Mammary epithelial cell (primary cell): ENCODE measurements at regions of chr1 and their contacts with region 1.

Region 1: GRCh38 chr1:156892190-156893047 is 1.1 kb upstream of the PEAR1 start:
- DNase-seq: peak; percentile 61
- H3K4me3 ChIP-seq: peak overlapping the region; percentile 7 to 43 (median 11)
- H3K27ac ChIP-seq: no peak overlapping the region
- H3K4me1 ChIP-seq: peaks cover 30% of the 10 kb centered on the region
- H3K27me3 ChIP-seq: no peaks in the 10 kb centered on the region
- CTCF ChIP-seq: peak; percentile 63 to 84

Region 2: GRCh38 chr1:156659994-156660751 is 232.2 kb before region 1 on chr1:
- CTCF ChIA-PET with region 1: no interaction called
- dilution Hi-C with region 1: no loop called
- in situ Hi-C with region 1: no loop called
- intact Hi-C with region 1: loop called (anchors 1 kb)
- DNase-seq: peak; percentile 95
- H3K4me3 ChIP-seq: peak overlapping the region; percentile 27 to 54 (median 46)
- H3K27ac ChIP-seq: peak overlapping the region; percentile 51
- H3K4me1 ChIP-seq: peaks cover 41% of the 10 kb centered on the region
- H3K27me3 ChIP-seq: no peaks in the 10 kb centered on the region
- CTCF ChIP-seq: peak; percentile 91 to 98

Region 3: DNA sequence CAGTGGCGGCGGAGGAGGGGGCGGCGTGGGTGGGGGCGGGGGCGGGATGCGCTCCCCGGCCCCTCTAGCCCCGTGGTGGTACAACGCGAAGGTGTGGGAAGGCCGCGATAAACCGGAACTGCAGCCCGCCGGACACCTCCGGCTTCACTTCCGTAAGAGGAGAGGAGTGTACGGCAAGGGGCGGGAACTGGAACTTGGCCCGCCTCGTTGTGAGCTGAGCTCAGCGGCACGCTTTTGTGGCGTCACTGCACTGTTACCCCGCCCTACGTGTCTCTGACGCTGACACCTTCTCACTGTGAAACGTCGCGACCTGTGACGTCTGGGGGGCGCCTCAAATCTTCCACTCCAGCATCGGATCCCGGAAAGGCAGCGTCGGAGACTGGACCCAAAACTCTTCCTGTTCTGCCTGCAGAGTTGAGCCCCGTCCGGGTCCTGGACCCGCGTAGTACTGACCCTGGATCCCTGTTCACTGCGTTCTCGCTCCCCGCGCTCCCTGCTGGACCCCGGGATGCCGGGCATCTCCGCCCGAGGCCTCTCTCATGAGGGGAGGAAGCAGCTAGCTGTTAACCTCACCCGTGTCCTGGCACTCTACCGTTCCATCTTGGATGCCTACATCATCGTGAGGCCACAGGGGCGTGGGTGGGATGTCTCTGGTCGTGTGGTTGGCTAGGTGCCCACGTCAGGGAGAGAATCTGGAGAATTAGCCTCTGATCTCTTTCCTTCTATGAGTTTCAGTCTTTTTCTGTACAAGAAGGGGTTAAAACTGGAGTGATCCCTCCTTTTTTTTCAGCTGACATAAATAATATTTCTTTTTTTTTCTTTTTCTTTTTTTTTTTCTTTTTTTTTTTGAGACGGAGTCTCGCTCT is 163.6 kb before region 1 on chr1 and contains the start of gene ISG20L2:
- CTCF ChIA-PET with region 1: interaction called, 5 read pairs
- dilution Hi-C with region 1: no loop called
- in situ Hi-C with region 1: loop called in 1 of 2 experiments (anchors 10 kb)
- intact Hi-C with region 1: loop called (anchors 1 kb)
- DNase-seq: peak; percentile 96
- H3K4me3 ChIP-seq: peak within 1 kb of the TSS; percentile 77 to 96 (median 90)
- H3K27ac ChIP-seq: peak within 1 kb of the TSS; percentile 87
- H3K4me1 ChIP-seq: peaks cover 41% of the 10 kb centered on the region
- H3K27me3 ChIP-seq: no peaks in the 10 kb centered on the region
- CTCF ChIP-seq: no peak
- total RNA-seq, gene ISG20L2: 27.0 to 42.7 TPM

Region 4: DNA sequence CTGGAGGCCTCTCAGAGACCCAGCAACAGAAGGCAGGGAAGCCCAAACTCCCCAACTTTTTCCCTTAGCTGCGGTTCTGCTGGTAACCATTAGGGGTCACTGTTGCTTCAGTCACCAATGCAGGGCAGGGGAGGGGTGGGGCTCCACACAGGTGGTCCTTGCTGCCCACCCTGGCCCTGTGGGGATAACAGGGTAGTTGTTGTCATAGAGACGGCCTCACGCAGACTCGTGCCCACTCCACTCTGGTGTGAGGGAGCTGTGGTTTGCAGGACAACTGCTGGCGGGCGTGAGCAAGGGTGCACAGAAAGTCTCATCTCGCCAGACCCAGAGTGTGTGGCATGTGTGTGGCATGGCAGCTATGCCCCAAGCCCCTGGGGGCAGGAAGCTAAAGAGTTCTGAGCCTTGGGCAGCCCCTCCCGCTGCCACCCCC is 53.4 kb before region 1 on chr1:
- CTCF ChIA-PET with region 1: no interaction called
- dilution Hi-C with region 1: loop called (anchors 5 kb)
- in situ Hi-C with region 1: no loop called
- intact Hi-C with region 1: loop called (anchors 1 kb)
- DNase-seq: no peak
- H3K4me3 ChIP-seq: no peak overlapping the region
- H3K27ac ChIP-seq: no peak overlapping the region
- H3K4me1 ChIP-seq: no peaks in the 10 kb centered on the region
- H3K27me3 ChIP-seq: no peaks in the 10 kb centered on the region
- CTCF ChIP-seq: peak; percentile 85 to 88

Region 5: GRCh38 chr1:156910309-156910782 is 17.9 kb after region 1 on chr1:
- CTCF ChIA-PET with region 1: no interaction called
- dilution Hi-C with region 1: no loop called
- in situ Hi-C with region 1: no loop called
- intact Hi-C with region 1: loop called (anchors 2 kb)
- DNase-seq: no peak
- H3K4me3 ChIP-seq: no peak overlapping the region
- H3K27ac ChIP-seq: no peak overlapping the region
- H3K4me1 ChIP-seq: peaks cover 13% of the 10 kb centered on the region
- H3K27me3 ChIP-seq: no peaks in the 10 kb centered on the region
- CTCF ChIP-seq: peak; percentile 50 to 83

Region 6: GRCh38 chr1:156927215-156928042 is 35.0 kb after region 1 on chr1:
- CTCF ChIA-PET with region 1: no interaction called
- dilution Hi-C with region 1: no loop called
- in situ Hi-C with region 1: no loop called
- intact Hi-C with region 1: loop called (anchors 1 kb)
- DNase-seq: peak; percentile 72
- H3K4me3 ChIP-seq: peak overlapping the region in 2 of 3 experiments; percentile 36 to 49
- H3K27ac ChIP-seq: no peak overlapping the region
- H3K4me1 ChIP-seq: peaks cover 17% of the 10 kb centered on the region
- H3K27me3 ChIP-seq: peaks cover 33% of the 10 kb centered on the region
- CTCF ChIP-seq: peak; percentile 69 to 89

Region 7: GRCh38 chr1:157073944-157074767 is 181.7 kb after region 1 on chr1:
- CTCF ChIA-PET with region 1: no interaction called
- dilution Hi-C with region 1: no loop called
- in situ Hi-C with region 1: no loop called
- intact Hi-C with region 1: loop called (anchors 10 kb)
- DNase-seq: peak; percentile 54
- H3K4me3 ChIP-seq: no peak overlapping the region
- H3K27ac ChIP-seq: no peak overlapping the region
- H3K4me1 ChIP-seq: no peaks in the 10 kb centered on the region
- H3K27me3 ChIP-seq: peaks cover 2% of the 10 kb centered on the region
- CTCF ChIP-seq: peak; percentile 39 to 64